ENCODE measurements at regions of chr5 and their contacts with region 1.

Region 1: GRCh38 chr5:67731886-67732285 is 483.7 kb upstream of the PIK3R1 start:
- DNase-seq: no peak

Region 2: GRCh38 chr5:67773411-67774266 is 41.8 kb after region 1 on chr5:
- intact Hi-C with region 1: loop called (anchors 1 kb)
- DNase-seq: peak; percentile 49 to 95 (median 72)

Measured in posterior cingulate gyrus (tissue), 11 donors.